GM10248 (cell line): ENCODE measurements at regions of chr9 and their contacts with region 1.

Region 1: DNA sequence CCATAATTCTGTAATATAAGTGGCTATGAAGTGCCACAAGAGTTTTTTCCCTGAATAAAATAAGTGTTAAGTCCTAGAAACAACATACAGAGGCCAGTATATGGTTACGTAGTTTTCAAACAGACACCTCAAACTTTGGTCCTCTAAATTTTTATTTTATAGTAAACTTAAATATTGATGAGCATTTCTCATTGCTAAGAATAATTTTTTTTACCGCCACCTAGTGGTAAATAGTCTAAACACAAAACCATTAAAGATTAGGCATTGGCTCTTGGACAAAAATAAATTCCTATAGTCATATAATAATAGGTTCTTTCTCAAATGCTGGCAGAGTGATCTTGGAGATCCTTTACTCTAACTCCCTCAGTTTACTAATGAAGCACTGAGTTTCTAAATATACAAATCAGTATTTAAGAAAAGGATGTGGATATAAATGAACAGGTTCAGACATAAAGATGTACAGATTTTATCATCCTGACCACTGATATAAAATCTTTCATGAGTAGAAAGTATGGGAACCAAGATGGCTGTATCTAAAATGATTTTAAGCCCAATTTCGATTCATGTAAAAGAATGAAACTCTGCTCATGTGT is 136.2 kb downstream of the FANCC start:
- DNase-seq: peak; percentile 41
- CTCF ChIP-seq: peak; percentile 50

Region 2: DNA sequence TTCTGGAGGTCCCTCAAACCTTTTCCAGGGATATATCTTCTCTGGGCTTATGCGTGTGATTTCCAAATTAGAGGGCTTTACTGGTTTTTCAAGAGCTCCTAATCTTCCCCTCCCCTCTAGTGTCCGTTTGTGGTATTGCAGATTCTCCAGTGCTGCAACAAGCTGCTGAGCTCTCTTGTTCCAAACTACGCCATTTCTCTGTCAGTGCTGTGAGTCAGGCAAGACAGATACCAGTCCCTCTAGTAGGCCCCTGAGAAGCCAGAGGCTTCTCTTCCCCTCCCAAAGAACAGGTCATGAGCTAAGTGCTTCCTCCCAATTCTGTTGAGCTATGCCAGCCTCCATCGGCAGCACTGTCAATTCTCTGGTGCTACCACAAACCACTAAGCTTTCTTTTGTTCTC is 13.3 kb before region 1 on chr9:
- CTCF ChIA-PET with region 1: interaction called, 38 read pairs
- POLR2A ChIA-PET with region 1: no interaction called
- DNase-seq: no peak
- CTCF ChIP-seq: peak; percentile 51